Colonic mucosa (tissue), 4 donors: ENCODE measurements at regions of chr1 and their contacts with region 1.

Region 1: DNA sequence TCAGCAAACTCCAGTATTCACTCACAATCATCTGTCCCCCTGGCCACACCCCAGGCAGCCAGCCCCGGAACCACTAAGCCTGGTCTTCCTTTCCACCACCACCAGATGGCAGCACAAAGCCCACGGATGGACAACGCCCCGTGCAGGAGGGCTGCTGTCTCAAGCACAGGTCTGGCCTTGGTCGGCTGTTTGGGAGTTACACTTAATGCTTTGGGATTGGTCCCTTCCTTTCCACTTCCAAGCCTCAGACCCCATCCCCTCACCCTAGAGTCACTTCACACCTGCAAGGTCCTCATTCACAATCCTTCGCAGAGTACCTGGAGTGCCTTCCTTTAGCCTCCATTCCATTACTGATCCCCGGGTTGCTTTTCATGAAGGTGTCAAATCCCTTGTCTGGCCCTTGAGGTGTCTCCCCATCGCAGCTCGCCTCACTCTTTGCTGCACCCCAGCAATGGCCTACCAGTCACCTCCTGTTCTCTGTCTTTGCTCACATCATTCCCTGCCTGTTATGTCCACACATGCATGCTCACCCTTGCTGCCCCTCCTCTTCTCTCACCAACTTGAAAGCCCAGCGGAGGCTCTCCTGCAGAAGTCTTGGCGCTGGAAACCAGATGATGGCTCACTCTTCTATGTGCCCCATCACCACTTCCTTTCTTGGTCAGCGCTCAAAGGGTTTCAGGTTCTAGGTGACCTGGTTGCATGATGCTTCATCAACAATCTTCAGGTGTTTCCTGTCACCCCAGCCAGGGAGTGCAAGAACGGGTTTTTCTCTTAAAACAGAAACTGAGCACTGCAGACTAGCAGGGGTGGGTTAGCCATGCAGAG is 24.9 kb upstream of the KCNA2 start:
- DNase-seq: peak; percentile 80
- H3K4me3 ChIP-seq: no peak overlapping the region
- H3K27ac ChIP-seq: peak overlapping the region; percentile 40
- H3K4me1 ChIP-seq: no peaks in the 10 kb centered on the region
- H3K27me3 ChIP-seq: no peaks in the 10 kb centered on the region
- CTCF ChIP-seq: peak; percentile 80

Region 2: DNA sequence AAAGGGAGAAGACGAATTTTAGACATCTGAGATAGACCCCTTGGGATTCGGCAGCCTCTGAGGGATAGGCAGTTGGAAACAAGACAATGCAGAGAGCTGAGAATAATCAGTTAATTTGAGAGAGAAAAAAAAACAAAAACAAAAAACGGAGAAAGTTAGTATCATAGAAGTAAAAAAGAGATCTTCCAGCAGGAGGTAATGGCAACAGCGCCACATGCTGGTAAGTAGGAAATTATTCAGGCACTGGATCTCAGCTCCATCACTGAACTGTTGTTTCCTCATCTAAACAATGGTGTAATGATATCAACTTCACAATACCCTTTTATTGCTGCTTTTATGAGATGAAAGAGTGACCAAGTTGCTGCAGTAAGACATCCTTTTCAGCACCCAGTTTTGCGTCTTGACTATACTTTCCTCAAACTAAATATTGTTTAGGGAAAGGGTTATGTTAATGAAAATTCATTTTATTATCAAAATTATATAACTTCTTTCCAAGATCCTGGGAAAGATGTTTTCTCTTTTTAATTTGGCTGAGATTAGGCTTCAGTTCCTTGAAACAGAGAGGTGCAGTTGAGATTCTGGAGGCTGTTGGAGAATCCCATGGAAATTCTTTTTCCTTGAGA is 135.1 kb after region 1 on chr1:
- intact Hi-C with region 1: loop called (anchors 5 kb)
- DNase-seq: peak; percentile 20
- H3K4me3 ChIP-seq: no peak overlapping the region
- H3K27ac ChIP-seq: no peak overlapping the region
- H3K4me1 ChIP-seq: no peaks in the 10 kb centered on the region
- H3K27me3 ChIP-seq: no peaks in the 10 kb centered on the region
- CTCF ChIP-seq: peak; percentile 63

Region 3: GRCh38 chr1:110780600-110781484 is 149.8 kb after region 1 on chr1:
- intact Hi-C with region 1: loop called (anchors 5 kb)
- DNase-seq: peak; percentile 69
- H3K4me3 ChIP-seq: no peak overlapping the region
- H3K27ac ChIP-seq: no peak overlapping the region
- H3K4me1 ChIP-seq: no peaks in the 10 kb centered on the region
- H3K27me3 ChIP-seq: no peaks in the 10 kb centered on the region
- CTCF ChIP-seq: peak; percentile 60

Region 4: DNA sequence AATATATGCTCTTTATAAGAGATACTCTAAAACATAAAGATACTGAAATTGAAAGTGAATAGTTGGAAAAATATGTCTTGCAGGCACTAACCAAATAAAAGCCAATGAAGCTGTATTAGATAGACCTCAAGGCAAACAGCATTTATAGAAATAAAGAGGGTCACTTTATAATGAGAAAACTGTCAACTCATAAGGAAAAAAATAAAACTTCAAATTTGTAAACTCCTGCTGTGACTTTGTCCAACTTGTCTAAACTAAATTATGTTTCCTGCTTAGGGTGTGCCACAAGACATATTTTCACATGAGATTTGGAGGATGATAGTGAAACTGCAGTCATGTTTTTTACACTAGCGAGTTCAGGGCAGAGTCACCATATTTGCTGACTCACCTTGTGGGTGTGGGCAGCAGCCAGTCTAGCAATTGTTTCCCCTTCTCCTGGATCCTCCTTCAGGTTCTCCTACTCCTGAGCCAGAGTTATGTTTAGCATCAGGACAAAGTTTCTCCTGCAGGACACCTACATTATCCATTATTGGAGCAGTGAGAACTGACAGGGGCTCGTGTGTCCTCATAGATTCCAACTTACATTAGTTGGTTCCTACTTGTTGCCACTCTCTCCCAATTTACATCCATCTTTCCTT is 285.7 kb after region 1 on chr1:
- intact Hi-C with region 1: no loop called
- DNase-seq: no peak
- H3K4me3 ChIP-seq: no peak overlapping the region
- H3K27ac ChIP-seq: no peak overlapping the region
- H3K4me1 ChIP-seq: no peaks in the 10 kb centered on the region
- H3K27me3 ChIP-seq: no peaks in the 10 kb centered on the region
- CTCF ChIP-seq: no peak

Region 5: GRCh38 chr1:111030590-111030989 is 399.5 kb after region 1 on chr1:
- intact Hi-C with region 1: no loop called
- DNase-seq: peak; percentile 63
- H3K4me3 ChIP-seq: no peak overlapping the region
- H3K27ac ChIP-seq: no peak overlapping the region
- H3K4me1 ChIP-seq: no peaks in the 10 kb centered on the region
- H3K27me3 ChIP-seq: no peaks in the 10 kb centered on the region
- CTCF ChIP-seq: peak; percentile 80